ENCODE measurements at regions of chrX and their contacts with region 1.

Region 1: GRCh38 chrX:147911192-147912022 is at the start of gene FMR1:
- DNase-seq: peak; percentile 84
- ATAC-seq: peak; percentile 92
- H3K4me3 ChIP-seq: peak within 1 kb of the TSS; percentile 76 to 85 (median 83)
- H3K27ac ChIP-seq: peak within 1 kb of the TSS; percentile 80
- H3K4me1 ChIP-seq: peaks cover 52% of the 10 kb centered on the region
- H3K27me3 ChIP-seq: no peaks in the 10 kb centered on the region
- CTCF ChIP-seq: no peak
- EP300 ChIP-seq: no peak
- POLR2A ChIP-seq: peak in 1 of 2 experiments; percentile 47; a peak in 2 of 4 replicates
- RAD21 ChIP-seq: no peak
- total RNA-seq, gene FMR1: 27.8 and 29.3 TPM in 2 replicates

Region 2: DNA sequence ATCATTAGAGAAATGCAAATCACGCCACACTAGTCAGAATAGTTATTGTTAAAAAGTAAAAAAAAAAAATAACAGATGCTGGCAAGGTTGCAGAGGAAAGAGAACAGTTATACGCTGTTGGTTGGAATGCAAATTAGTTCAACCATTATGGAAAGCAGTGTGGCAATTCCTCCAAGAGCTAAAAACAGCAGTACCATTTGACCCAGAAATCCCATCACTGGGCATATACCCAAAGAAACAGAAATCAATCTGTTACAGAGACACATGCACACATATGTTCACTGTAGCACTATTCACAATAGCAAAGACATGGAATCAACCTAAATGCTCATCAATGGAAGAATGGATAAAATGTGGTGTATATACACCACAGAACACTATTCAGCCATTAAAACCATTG is 388.4 kb before region 1 on chrX:
- CTCF ChIA-PET with region 1: no interaction called
- POLR2A ChIA-PET with region 1: no interaction called
- in situ Hi-C with region 1: no loop called
- intact Hi-C with region 1: no loop called
- DNase-seq: no peak
- ATAC-seq: no peak
- H3K4me3 ChIP-seq: no peak overlapping the region
- H3K27ac ChIP-seq: no peak overlapping the region
- H3K4me1 ChIP-seq: no peaks in the 10 kb centered on the region
- H3K27me3 ChIP-seq: no peaks in the 10 kb centered on the region
- CTCF ChIP-seq: no peak
- EP300 ChIP-seq: no peak
- POLR2A ChIP-seq: no peak
- RAD21 ChIP-seq: no peak

Region 3: DNA sequence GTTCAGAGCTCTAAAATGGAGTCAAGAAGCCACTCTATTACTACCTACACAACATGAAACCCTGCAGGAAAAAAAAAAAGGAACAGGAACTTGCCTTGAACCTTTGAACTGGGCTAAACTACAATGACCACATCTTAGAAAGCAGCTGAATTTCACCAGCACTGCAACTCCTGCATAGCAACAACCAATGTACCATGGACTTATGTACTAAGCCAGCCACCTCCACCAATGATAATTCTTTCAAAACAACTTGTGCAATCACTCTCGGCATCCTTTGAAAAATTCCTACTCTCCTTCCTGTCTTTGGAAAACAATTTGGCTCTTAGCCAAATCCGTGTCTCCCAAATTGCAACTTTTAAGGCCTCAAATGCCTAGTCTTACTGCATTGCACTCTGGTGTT is 26.4 kb before region 1 on chrX:
- CTCF ChIA-PET with region 1: no interaction called
- POLR2A ChIA-PET with region 1: interaction called, 8 read pairs
- in situ Hi-C with region 1: no loop called
- intact Hi-C with region 1: loop called (anchors 2 kb)
- DNase-seq: peak; percentile 96
- ATAC-seq: peak; percentile 98
- H3K4me3 ChIP-seq: no peak overlapping the region
- H3K27ac ChIP-seq: peak overlapping the region; percentile 84
- H3K4me1 ChIP-seq: peaks cover 33% of the 10 kb centered on the region
- H3K27me3 ChIP-seq: no peaks in the 10 kb centered on the region
- CTCF ChIP-seq: no peak
- EP300 ChIP-seq: peak; percentile 14 to 96; a peak in 2 of 4 replicates
- POLR2A ChIP-seq: no peak
- RAD21 ChIP-seq: no peak

Region 4: GRCh38 chrX:147958291-147958690 is 46.9 kb after region 1 on chrX:
- CTCF ChIA-PET with region 1: no interaction called
- POLR2A ChIA-PET with region 1: no interaction called
- in situ Hi-C with region 1: no loop called
- intact Hi-C with region 1: no loop called
- DNase-seq: no peak
- ATAC-seq: no peak
- H3K4me3 ChIP-seq: no peak overlapping the region
- H3K27ac ChIP-seq: no peak overlapping the region
- H3K4me1 ChIP-seq: no peaks in the 10 kb centered on the region
- H3K27me3 ChIP-seq: no peaks in the 10 kb centered on the region
- CTCF ChIP-seq: no peak
- EP300 ChIP-seq: no peak
- POLR2A ChIP-seq: no peak
- RAD21 ChIP-seq: no peak

Measured in HepG2 (cell line).